OCI-LY7 (cell line): ENCODE measurements at regions of chr1 and their contacts with region 1.

Region 1: GRCh38 chr1:180178511-180179161 is 24.0 kb downstream of the QSOX1 start:
- DNase-seq: peak; percentile 61
- H3K4me3 ChIP-seq: no peak overlapping the region
- H3K27ac ChIP-seq: no peak overlapping the region
- H3K4me1 ChIP-seq: no peaks in the 10 kb centered on the region
- CTCF ChIP-seq: peak; percentile 98

Region 2: GRCh38 chr1:179706339-179706941 is 472.2 kb before region 1 on chr1:
- CTCF ChIA-PET with region 1: no interaction called
- POLR2A ChIA-PET with region 1: no interaction called
- intact Hi-C with region 1: loop called (anchors 2 kb)
- DNase-seq: peak; percentile 70
- H3K4me3 ChIP-seq: no peak overlapping the region
- H3K27ac ChIP-seq: no peak overlapping the region
- H3K4me1 ChIP-seq: no peaks in the 10 kb centered on the region
- CTCF ChIP-seq: peak; percentile 98

Region 3: GRCh38 chr1:179809506-179810366 is 368.9 kb before region 1 on chr1:
- CTCF ChIA-PET with region 1: interaction called, 3 read pairs
- POLR2A ChIA-PET with region 1: no interaction called
- intact Hi-C with region 1: loop called (anchors 5 kb)
- DNase-seq: peak; percentile 81
- H3K4me3 ChIP-seq: no peak overlapping the region
- H3K27ac ChIP-seq: no peak overlapping the region
- H3K4me1 ChIP-seq: peaks cover 4% of the 10 kb centered on the region
- CTCF ChIP-seq: peak; percentile 94

Region 4: GRCh38 chr1:179867807-179868330 is 310.8 kb before region 1 on chr1:
- CTCF ChIA-PET with region 1: interaction called, 6 read pairs
- POLR2A ChIA-PET with region 1: no interaction called
- intact Hi-C with region 1: loop called (anchors 1 kb)
- DNase-seq: peak; percentile 64
- H3K4me3 ChIP-seq: no peak overlapping the region
- H3K27ac ChIP-seq: no peak overlapping the region
- H3K4me1 ChIP-seq: peaks cover 22% of the 10 kb centered on the region
- CTCF ChIP-seq: peak; percentile 94

Region 5: DNA sequence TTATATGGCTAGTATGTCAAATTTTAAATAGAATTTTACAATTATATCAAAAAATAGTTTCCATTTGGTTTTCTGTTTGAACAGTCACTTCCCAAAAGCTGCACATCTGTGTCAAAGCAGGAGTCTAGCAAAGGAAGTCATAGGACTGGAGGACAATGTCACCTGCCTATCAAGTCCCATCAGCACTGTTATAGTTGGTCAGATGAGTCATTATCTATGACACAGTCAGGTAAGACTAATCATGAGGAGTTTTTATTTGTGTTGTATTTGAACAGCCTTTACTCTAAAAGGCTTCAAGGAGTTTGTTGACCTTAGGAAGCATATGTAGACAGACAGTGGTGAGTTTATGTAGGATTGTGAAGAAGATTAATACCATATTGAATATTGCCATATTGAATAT is 98.2 kb before region 1 on chr1:
- CTCF ChIA-PET with region 1: no interaction called
- POLR2A ChIA-PET with region 1: no interaction called
- intact Hi-C with region 1: no loop called
- DNase-seq: no peak
- H3K4me3 ChIP-seq: no peak overlapping the region
- H3K27ac ChIP-seq: no peak overlapping the region
- H3K4me1 ChIP-seq: no peaks in the 10 kb centered on the region
- CTCF ChIP-seq: no peak